T-cell (primary cell): ENCODE measurements at regions of chr5 and their contacts with region 1.

Region 1: GRCh38 chr5:80935811-80936385 is 24.3 kb upstream of the RASGRF2 start:
- DNase-seq: peak in 1 of 35 experiments; percentile 25
- ATAC-seq: peak in 2 of 4 experiments; percentile 45 to 52
- H3K4me3 ChIP-seq: no peak overlapping the region
- H3K4me3 Mint-ChIP-seq: no peak overlapping the region
- H3K27ac ChIP-seq: no peak overlapping the region
- H3K27ac Mint-ChIP-seq: no peak overlapping the region
- H3K4me1 ChIP-seq: no peaks in the 10 kb centered on the region
- H3K4me1 Mint-ChIP-seq: peaks cover 5 to 9% (median 9%) of the 10 kb centered on the region in 3 donors
- H3K27me3 ChIP-seq: no peaks in the 10 kb centered on the region
- H3K27me3 Mint-ChIP-seq: peaks cover 2 to 4% of the 10 kb centered on the region in 2 donors

Region 2: GRCh38 chr5:80894083-80894482 is 41.8 kb before region 1 on chr5:
- CTCF ChIA-PET with region 1: interaction called in 1 of 2 experiments, 16 read pairs
- POLR2A ChIA-PET with region 1: no interaction called
- DNase-seq: no peak
- ATAC-seq: no peak
- H3K4me3 ChIP-seq: no peak overlapping the region
- H3K4me3 Mint-ChIP-seq: no peak overlapping the region
- H3K27ac ChIP-seq: no peak overlapping the region
- H3K27ac Mint-ChIP-seq: no peak overlapping the region
- H3K4me1 ChIP-seq: no peaks in the 10 kb centered on the region
- H3K4me1 Mint-ChIP-seq: no peaks in the 10 kb centered on the region
- H3K27me3 ChIP-seq: no peaks in the 10 kb centered on the region
- H3K27me3 Mint-ChIP-seq: no peaks in the 10 kb centered on the region

Region 3: GRCh38 chr5:80960531-80961375 is 24.9 kb after region 1 on chr5:
- CTCF ChIA-PET with region 1: interaction called in 1 of 2 experiments, 10 read pairs
- POLR2A ChIA-PET with region 1: interaction called in 1 of 2 experiments, 5 read pairs
- DNase-seq: peak in 31 of 35 experiments; percentile 9 to 68 (median 36)
- ATAC-seq: peak; percentile 32 to 71 (median 66)
- H3K4me3 ChIP-seq: peak overlapping the region; percentile 60 to 98
- H3K4me3 Mint-ChIP-seq: peak overlapping the region; percentile 85 to 89 (median 88)
- H3K27ac ChIP-seq: peak overlapping the region; percentile 19
- H3K27ac Mint-ChIP-seq: peak overlapping the region; percentile 88 to 93
- H3K4me1 ChIP-seq: peaks cover 30 to 37% of the 10 kb centered on the region in 2 experiments
- H3K4me1 Mint-ChIP-seq: peaks cover 58 to 65% (median 61%) of the 10 kb centered on the region in 3 donors
- H3K27me3 ChIP-seq: peaks cover 0 to 5% of the 10 kb centered on the region in 2 experiments
- H3K27me3 Mint-ChIP-seq: peaks cover 0 to 5% of the 10 kb centered on the region in 2 donors